ENCODE measurements at regions of chr3 and their contacts with region 1.

Region 1: DNA sequence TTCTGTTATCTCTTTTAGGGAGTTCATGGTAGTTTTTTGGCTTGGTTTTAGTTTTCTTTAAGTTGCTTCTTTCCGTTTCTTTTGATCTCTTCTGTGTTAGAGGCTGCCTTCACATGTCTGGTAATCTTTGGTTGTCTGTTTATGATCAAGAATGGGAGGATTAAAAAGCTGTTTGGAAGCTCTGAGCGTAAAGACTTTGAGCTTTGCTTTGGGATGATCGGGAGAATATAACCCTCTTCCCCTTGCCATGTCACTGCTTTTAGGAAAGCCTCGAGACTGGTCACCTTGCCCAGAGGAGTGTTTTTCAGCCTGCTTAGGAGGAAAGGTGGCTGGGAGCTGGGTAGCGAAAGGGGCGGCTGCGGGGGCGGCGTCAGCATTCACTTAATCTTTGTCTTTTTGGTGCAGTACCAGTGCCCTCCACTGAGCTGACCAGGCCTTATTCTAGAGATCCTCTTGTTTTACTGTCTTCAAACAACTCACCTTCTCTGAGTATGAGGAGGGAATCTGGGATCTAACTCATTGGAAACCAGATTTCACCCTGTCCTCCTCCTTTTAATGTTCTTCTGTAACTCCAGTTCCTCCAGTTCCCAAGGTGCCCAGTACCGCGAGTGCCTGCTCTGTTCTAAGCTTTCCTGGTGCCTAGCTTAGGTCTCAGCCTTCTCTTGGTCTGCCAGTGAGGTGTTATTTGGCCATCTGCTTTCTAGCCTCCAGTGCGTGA is 15.5 kb downstream of the TATDN2 start:
- DNase-seq: peak; percentile 33 to 76 (median 71)
- ATAC-seq: peak; percentile 96
- H3K4me3 ChIP-seq: peak overlapping the region; percentile 47
- H3K4me3 Mint-ChIP-seq: peak overlapping the region; percentile 68 to 87 (median 77)
- H3K27ac ChIP-seq: peak overlapping the region; percentile 73
- H3K27ac Mint-ChIP-seq: peak overlapping the region; percentile 82 to 97 (median 91)
- H3K4me1 ChIP-seq: peaks cover 36 to 62% of the 10 kb centered on the region in 2 donors
- H3K4me1 Mint-ChIP-seq: peaks cover 50 to 97% (median 80%) of the 10 kb centered on the region in 7 donors
- H3K27me3 ChIP-seq: no peaks in the 10 kb centered on the region
- H3K27me3 Mint-ChIP-seq: no peaks in the 10 kb centered on the region

Region 2: DNA sequence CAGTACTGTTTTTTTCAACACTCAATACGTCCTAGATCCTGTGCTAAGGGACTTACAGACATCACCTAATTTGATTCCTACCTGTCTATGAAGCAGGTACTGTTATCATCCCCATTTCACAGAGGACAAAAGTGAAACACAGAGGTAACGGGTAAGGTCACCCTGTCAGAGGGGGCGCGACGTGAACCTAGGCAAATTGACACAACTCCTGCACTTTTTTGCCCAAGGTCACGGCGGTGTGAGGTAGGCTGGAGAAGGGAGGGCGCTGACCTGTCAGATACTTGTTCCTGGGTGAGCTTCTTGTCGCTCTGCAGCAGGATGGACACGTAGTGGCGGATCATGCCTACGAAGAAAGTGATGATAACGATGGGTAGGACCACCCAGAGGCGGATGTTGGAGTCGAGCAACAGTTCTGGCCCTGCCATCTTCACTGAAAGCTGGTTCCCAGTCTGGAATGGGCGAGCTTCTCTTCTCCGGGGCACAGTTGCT is 277.5 kb before region 1 on chr3:
- CTCF ChIA-PET with region 1: interaction called, 3 read pairs
- POLR2A ChIA-PET with region 1: no interaction called
- intact Hi-C with region 1: loop called in 1 of 2 experiments (anchors 2 kb)
- DNase-seq: no peak
- ATAC-seq: peak; percentile 52
- H3K4me3 ChIP-seq: peak overlapping the region; percentile 100
- H3K4me3 Mint-ChIP-seq: peak overlapping the region; percentile 95 to 99 (median 98)
- H3K27ac ChIP-seq: peak overlapping the region; percentile 96
- H3K27ac Mint-ChIP-seq: peak overlapping the region; percentile 95 to 100 (median 98)
- H3K4me1 ChIP-seq: peaks cover 13 to 15% of the 10 kb centered on the region in 2 donors
- H3K4me1 Mint-ChIP-seq: peaks cover 0 to 48% (median 35%) of the 10 kb centered on the region in 7 donors
- H3K27me3 ChIP-seq: no peaks in the 10 kb centered on the region
- H3K27me3 Mint-ChIP-seq: no peaks in the 10 kb centered on the region

Region 3: GRCh38 chr3:10164546-10165393 is 99.0 kb before region 1 on chr3 and contains the start of gene IRAK2:
- CTCF ChIA-PET with region 1: interaction called, 3 read pairs
- POLR2A ChIA-PET with region 1: no interaction called
- intact Hi-C with region 1: loop called in 1 of 2 experiments (anchors 1 kb)
- DNase-seq: peak; percentile 25 to 75 (median 57)
- ATAC-seq: peak; percentile 92
- H3K4me3 ChIP-seq: peak within 1 kb of the TSS; percentile 85
- H3K4me3 Mint-ChIP-seq: peak within 1 kb of the TSS; percentile 79 to 94 (median 86)
- H3K27ac ChIP-seq: peak within 1 kb of the TSS; percentile 68
- H3K27ac Mint-ChIP-seq: peak within 1 kb of the TSS; percentile 2 to 89 (median 68)
- H3K4me1 ChIP-seq: peaks cover 5 to 9% of the 10 kb centered on the region in 2 donors
- H3K4me1 Mint-ChIP-seq: peaks cover 12 to 37% (median 25%) of the 10 kb centered on the region in 7 donors
- H3K27me3 ChIP-seq: no peaks in the 10 kb centered on the region
- H3K27me3 Mint-ChIP-seq: no peaks in the 10 kb centered on the region
- total RNA-seq, gene IRAK2: 1.5 to 4.8 (median 2.3) TPM

Region 4: GRCh38 chr3:10177737-10178136 is 86.1 kb before region 1 on chr3:
- CTCF ChIA-PET with region 1: no interaction called
- POLR2A ChIA-PET with region 1: no interaction called
- intact Hi-C with region 1: no loop called
- DNase-seq: no peak
- ATAC-seq: no peak
- H3K4me3 ChIP-seq: no peak overlapping the region
- H3K4me3 Mint-ChIP-seq: no peak overlapping the region
- H3K27ac ChIP-seq: no peak overlapping the region
- H3K27ac Mint-ChIP-seq: no peak overlapping the region
- H3K4me1 ChIP-seq: no peaks in the 10 kb centered on the region
- H3K4me1 Mint-ChIP-seq: peaks cover 0 to 28% (median 21%) of the 10 kb centered on the region in 7 donors
- H3K27me3 ChIP-seq: no peaks in the 10 kb centered on the region
- H3K27me3 Mint-ChIP-seq: no peaks in the 10 kb centered on the region

Region 5: DNA sequence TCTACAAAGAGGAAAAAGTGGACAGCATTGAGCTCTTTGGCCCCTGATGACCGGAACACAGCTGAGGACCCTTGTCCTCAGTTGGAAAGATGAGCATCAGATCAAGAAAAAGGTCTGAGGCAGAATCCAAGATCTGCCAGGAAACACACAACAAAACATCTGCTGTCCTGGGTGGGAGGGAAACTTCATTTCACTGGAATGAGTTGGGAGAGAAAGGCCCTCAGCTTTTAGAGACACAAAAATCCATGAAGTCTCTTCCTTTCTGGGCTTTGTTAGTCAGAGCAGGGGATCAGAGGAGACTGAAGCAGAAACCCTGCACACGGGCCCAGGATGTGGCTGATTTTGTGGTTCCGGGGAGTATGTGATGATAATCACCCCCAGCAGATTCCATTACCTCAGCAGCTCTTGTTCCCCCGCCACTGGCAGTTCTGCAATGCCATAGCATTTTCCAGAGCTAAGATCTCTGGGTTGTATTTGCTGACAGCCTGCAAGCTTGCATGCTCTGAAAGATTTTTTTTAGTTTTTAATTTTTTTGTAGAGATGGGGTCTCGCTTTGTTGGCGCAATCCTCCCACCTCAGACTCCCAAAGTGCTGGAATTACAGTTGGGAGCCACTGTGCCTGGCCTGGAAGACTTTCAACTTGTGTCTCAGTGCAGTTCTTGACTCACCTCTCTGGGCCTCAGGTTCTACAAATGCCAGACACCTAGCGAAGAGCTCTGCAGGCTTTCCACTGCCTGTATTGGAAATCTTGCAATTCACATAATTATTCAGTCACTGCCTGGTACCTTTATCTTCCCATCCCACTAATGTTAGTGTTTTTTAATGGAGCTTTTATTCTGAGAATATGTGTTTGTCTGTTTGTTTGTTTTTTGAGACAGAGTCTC is 21.4 kb before region 1 on chr3:
- CTCF ChIA-PET with region 1: interaction called, 8 read pairs
- POLR2A ChIA-PET with region 1: interaction called, 71 read pairs
- intact Hi-C with region 1: loop called in 1 of 2 experiments (anchors 1 kb)
- DNase-seq: peak; percentile 20 to 93 (median 84)
- ATAC-seq: peak; percentile 98
- H3K4me3 ChIP-seq: peak overlapping the region; percentile 13
- H3K4me3 Mint-ChIP-seq: peak overlapping the region; percentile 75 to 82 (median 77)
- H3K27ac ChIP-seq: peak overlapping the region; percentile 71
- H3K27ac Mint-ChIP-seq: peak overlapping the region; percentile 86 to 96 (median 93)
- H3K4me1 ChIP-seq: peaks cover 33 to 43% of the 10 kb centered on the region in 2 donors
- H3K4me1 Mint-ChIP-seq: peaks cover 40 to 60% (median 54%) of the 10 kb centered on the region in 7 donors
- H3K27me3 ChIP-seq: no peaks in the 10 kb centered on the region
- H3K27me3 Mint-ChIP-seq: no peaks in the 10 kb centered on the region

Region 6: GRCh38 chr3:10253731-10254130 is 10.1 kb before region 1 on chr3:
- CTCF ChIA-PET with region 1: interaction called, 3 read pairs
- POLR2A ChIA-PET with region 1: interaction called, 71 read pairs
- intact Hi-C with region 1: loop called (anchors 1 kb)
- DNase-seq: no peak
- ATAC-seq: no peak
- H3K4me3 ChIP-seq: no peak overlapping the region
- H3K4me3 Mint-ChIP-seq: peak overlapping the region in 8 of 10 donors; percentile 10 to 96 (median 46)
- H3K27ac ChIP-seq: no peak overlapping the region
- H3K27ac Mint-ChIP-seq: peak overlapping the region; percentile 41 to 88 (median 75)
- H3K4me1 ChIP-seq: peaks cover 32% of the 10 kb centered on the region in 2 donors
- H3K4me1 Mint-ChIP-seq: peaks cover 57 to 90% (median 73%) of the 10 kb centered on the region in 7 donors
- H3K27me3 ChIP-seq: no peaks in the 10 kb centered on the region
- H3K27me3 Mint-ChIP-seq: no peaks in the 10 kb centered on the region

Region 7: GRCh38 chr3:10280177-10280529 is 16.3 kb after region 1 on chr3:
- CTCF ChIA-PET with region 1: interaction called, 4 read pairs
- POLR2A ChIA-PET with region 1: no interaction called
- intact Hi-C with region 1: loop called in 1 of 2 experiments (anchors 2 kb)
- DNase-seq: no peak
- ATAC-seq: no peak
- H3K4me3 ChIP-seq: no peak overlapping the region
- H3K4me3 Mint-ChIP-seq: peak overlapping the region in 1 of 10 donors; percentile 29
- H3K27ac ChIP-seq: no peak overlapping the region
- H3K27ac Mint-ChIP-seq: peak overlapping the region in 7 of 9 donors; percentile 32 to 86 (median 61)
- H3K4me1 ChIP-seq: peaks cover 12% of the 10 kb centered on the region in 2 donors
- H3K4me1 Mint-ChIP-seq: peaks cover 11 to 52% (median 40%) of the 10 kb centered on the region in 7 donors
- H3K27me3 ChIP-seq: no peaks in the 10 kb centered on the region
- H3K27me3 Mint-ChIP-seq: no peaks in the 10 kb centered on the region